SK-N-SH (cell line): ENCODE measurements at regions of chr21 and their contacts with region 1.

Region 1: GRCh38 chr21:32940079-32941014 is 85.4 kb upstream of the OLIG2 start:
- DNase-seq: peak; percentile 28
- H3K4me3 ChIP-seq: no peak overlapping the region
- H3K27ac ChIP-seq: no peak overlapping the region
- H3K4me1 ChIP-seq: no peaks in the 10 kb centered on the region
- H3K27me3 ChIP-seq: peaks cover 54% of the 10 kb centered on the region
- CTCF ChIP-seq: peak; percentile 78
- EP300 ChIP-seq: no peak
- RAD21 ChIP-seq: peak; percentile 57

Region 2: GRCh38 chr21:32929633-32930038 is 10.7 kb before region 1 on chr21:
- CTCF ChIA-PET with region 1: interaction called, 33 read pairs
- POLR2A ChIA-PET with region 1: no interaction called
- DNase-seq: no peak
- H3K4me3 ChIP-seq: no peak overlapping the region
- H3K27ac ChIP-seq: no peak overlapping the region
- H3K4me1 ChIP-seq: no peaks in the 10 kb centered on the region
- H3K27me3 ChIP-seq: peaks cover 28% of the 10 kb centered on the region; the same call in 1 of the 2 replicates
- CTCF ChIP-seq: no peak
- EP300 ChIP-seq: no peak
- RAD21 ChIP-seq: no peak

Region 3: DNA sequence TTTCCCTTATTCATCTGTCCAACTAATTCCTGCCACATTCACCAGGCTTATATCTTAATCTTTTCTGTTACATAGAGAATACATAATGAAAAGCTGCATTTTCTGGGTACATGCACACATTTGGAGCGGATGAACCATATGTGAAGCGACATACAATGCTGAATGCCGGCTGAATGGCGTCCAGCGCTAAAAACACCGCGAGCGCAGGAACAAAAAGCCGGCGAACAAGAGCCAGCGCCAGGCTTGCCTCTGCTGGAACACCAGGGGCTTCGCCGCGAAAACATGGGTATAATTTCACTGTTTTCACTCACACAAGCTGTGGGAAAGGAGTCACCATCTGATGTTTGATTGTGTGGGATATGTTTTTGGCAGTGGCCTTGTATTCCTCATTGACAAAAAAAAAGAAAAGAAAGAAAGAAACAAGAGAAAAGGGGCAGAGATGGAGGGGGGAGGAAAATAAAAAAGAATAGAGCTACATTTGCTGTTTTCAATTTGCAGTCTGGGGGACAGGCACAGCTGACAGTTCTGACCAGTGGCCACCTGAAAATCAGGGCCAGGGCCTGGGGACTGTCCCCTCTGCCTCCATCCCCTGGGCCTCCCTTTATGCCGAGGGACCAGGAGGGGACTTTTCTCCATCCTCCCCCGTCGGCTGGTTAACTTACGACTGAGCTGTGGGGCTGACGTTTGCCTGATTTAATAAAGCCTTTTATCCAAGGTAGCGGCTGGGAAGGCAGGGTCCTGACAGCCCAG is 15.1 kb after region 1 on chr21:
- CTCF ChIA-PET with region 1: interaction called, 13 read pairs
- POLR2A ChIA-PET with region 1: no interaction called
- DNase-seq: no peak
- H3K4me3 ChIP-seq: no peak overlapping the region
- H3K27ac ChIP-seq: no peak overlapping the region
- H3K4me1 ChIP-seq: no peaks in the 10 kb centered on the region
- H3K27me3 ChIP-seq: peaks cover 84% of the 10 kb centered on the region
- CTCF ChIP-seq: no peak
- EP300 ChIP-seq: no peak
- RAD21 ChIP-seq: no peak

Region 4: DNA sequence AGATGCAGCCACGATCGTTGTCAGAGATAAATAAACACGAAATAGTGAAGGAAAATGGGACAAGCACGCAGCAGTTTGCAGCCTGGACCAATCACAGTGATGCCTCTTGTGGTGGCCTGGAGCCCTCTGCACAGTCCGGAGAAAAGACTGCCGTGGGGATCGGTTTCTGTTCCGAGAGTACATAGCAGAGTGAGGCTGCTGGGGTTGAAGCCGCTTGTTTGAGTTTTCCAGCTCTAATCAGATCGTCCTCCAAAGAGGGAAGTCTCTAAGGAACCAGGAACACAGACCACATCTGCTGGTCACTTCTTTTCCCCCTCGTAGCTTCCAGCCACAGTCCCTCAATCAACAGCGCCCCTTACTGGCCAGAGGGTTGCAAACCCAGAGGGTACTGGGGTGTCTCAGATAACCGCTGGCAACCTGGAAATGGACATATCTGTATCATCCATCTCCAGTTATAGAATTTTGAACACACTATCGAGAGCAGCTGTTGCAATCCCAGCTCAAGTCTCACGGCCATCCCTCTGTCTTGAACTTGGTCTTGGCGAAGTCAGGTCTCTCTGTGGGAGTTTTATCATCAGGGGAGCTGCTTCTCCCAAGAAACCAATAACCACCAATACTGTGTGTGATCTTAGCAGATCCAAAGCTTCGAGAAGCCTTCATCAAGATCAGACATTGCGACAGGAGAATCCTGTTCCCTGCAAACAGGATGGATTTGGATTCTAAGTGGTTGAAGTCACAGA is 187.0 kb after region 1 on chr21:
- CTCF ChIA-PET with region 1: interaction called, 12 read pairs
- POLR2A ChIA-PET with region 1: no interaction called
- DNase-seq: peak; percentile 60
- H3K4me3 ChIP-seq: peak overlapping the region in 1 of 2 experiments; percentile 44; a peak in 3 of 4 replicates
- H3K27ac ChIP-seq: no peak overlapping the region
- H3K4me1 ChIP-seq: no peaks in the 10 kb centered on the region; a peak in 1 of 4 replicates
- H3K27me3 ChIP-seq: peaks cover 88% of the 10 kb centered on the region
- CTCF ChIP-seq: peak; percentile 87
- EP300 ChIP-seq: no peak
- RAD21 ChIP-seq: peak; percentile 74